AG04449 (cell line): ENCODE measurements at regions of chr12 and their contacts with region 1.

Region 1: DNA sequence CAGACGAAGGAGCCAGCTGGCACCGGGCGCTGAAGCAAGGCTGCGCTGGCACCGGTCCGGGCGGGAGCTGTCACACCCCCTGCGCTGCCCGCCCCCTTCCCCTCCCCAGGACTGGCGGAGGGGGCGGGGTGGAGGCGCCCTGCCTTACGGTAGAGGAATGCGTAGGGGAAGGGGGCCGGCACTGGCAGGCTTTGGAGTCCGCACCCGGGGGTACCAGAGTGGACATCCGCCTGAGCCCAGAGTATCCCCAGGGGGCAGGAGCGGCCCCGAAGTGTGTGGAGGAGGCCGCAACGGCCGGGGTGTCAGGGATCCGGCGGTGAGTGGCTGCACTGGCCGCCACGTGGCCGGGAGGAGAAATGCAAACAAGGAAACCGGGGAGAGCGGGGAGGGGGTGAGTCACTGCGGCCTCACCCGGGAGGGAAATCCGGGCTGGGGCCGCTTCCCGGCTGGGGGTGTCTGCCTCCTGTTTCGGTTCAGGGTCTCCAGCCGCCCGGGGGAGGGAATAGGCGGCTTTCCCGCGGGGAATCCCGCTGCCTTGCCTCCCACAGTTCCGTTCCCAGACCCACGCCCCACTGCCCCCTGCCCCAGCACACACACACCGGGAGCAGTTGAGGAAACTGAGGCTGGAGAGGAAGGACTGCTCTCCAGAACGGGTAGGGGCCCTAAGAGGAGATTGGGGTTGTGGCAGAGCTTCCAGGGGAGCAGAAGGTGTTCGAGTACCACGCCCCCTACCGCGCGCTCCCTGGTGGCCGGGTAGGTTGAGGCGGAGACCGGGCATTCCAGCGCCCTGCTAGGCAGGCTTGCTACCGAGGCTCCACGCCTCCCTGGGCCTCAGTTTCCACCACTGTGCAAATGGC is at the start of gene RAPGEF3:
- DNase-seq: no peak
- H3K4me3 ChIP-seq: peak within 1 kb of the TSS; percentile 68
- CTCF ChIP-seq: peak; percentile 71

Region 2: DNA sequence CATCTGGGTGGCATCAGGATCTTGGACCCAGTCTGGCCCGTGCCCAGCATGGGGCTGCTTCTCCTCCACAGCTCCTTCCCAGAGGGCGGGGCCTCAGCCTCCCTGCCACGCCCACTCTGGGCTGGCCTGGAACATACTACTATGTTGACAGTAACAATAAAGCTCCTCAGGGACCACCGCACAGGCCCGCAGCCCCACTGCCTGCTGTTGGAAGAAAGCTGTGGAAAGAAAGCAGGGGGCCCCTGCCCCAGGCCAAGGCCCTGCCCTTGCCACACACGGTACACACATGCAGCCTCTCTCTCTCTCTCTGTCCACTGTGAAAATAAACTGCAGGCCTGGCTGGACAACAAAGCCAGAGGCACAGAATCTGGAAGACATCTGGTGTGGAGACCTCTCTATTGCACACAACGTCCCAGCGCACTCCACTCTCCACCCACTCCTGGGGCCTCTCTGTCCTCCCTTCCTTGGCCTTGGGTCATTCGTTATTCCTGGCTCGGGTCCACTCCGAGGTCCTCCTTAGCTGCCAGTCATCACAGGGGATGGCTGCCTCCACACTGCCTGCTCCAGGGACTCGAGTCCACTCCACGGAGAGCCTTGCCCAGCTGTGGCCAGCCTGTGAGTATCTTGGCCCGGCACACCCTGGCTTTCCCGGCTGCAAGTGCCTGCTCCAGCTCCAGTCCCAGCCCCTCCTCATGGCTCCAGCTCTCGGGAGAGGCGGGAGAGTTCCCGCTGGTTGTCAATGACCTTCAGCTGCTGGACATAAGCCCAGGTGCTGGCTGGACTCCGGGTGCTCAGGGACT is 22.0 kb before region 1 on chr12:
- CTCF ChIA-PET with region 1: interaction called, 349 read pairs
- POLR2A ChIA-PET with region 1: interaction called, 3 read pairs
- DNase-seq: no peak
- H3K4me3 ChIP-seq: no peak overlapping the region
- CTCF ChIP-seq: no peak

Region 3: GRCh38 chr12:47808050-47808449 is 49.0 kb after region 1 on chr12:
- CTCF ChIA-PET with region 1: no interaction called
- POLR2A ChIA-PET with region 1: no interaction called
- DNase-seq: no peak
- H3K4me3 ChIP-seq: no peak overlapping the region
- CTCF ChIP-seq: no peak